B cell (primary cell): ENCODE measurements at regions of chr17 and their contacts with region 1.

Region 1: DNA sequence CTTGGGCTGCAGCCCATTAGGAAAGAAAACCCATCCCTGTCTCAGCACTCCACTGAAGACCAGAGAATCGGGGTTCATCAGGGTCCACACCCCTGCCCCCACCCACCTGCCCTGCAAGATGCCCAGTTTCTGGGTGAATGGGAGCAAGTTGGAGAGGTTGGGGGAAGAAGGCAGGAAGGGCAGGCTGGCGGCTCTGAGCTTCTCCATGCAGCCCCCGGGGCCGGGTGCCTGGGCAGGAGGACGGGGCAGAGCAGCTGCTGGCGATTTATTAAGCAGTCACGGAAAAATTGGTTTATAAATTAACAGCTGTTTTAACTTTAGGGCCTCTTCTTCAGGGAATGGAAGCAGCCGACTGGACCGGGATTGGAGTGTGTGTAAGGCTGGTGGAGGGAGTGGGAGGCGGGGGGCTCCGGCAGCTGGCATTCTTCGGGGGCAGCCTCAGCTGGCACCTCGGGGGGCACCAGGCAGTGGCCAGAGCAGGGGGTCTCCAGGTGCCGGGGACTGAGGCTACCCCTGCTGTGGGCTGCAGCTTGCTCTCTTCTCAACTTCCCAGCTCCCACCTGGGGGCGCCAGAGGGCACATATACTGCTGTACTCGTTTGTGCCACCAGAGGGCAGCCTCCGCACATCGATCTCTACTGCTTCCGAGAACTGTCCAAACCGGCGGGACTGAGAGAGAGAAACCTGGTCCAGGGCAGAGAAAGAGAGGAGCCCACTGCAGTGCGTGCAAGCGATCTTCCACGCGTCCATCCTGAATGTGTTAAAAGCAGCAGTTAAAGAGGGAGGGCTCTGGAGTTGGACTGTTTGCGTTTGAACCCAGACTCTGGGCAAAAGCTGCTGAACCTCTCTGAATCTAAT is 5.0 kb upstream of the PPP1R1B start:
- DNase-seq: peak; percentile 92
- ATAC-seq: peak; percentile 76
- H3K4me3 ChIP-seq: peak overlapping the region in 4 of 5 experiments; percentile 14 to 38 (median 29)
- H3K4me3 Mint-ChIP-seq: peak overlapping the region; percentile 84
- H3K27ac ChIP-seq: no peak overlapping the region
- H3K27ac Mint-ChIP-seq: peak overlapping the region; percentile 75
- H3K4me1 ChIP-seq: peaks cover 31 to 51% of the 10 kb centered on the region in 2 donors
- H3K4me1 Mint-ChIP-seq: peaks cover 32% of the 10 kb centered on the region
- H3K27me3 ChIP-seq: peaks cover 0 to 29% (median 9%) of the 10 kb centered on the region in 4 experiments
- H3K27me3 Mint-ChIP-seq: peaks cover 7% of the 10 kb centered on the region
- CTCF ChIP-seq: peak; percentile 100

Region 2: GRCh38 chr17:39527220-39527813 is 94.4 kb before region 1 on chr17:
- CTCF ChIA-PET with region 1: interaction called, 11 read pairs
- POLR2A ChIA-PET with region 1: no interaction called
- intact Hi-C with region 1: loop called (anchors 1 kb)
- DNase-seq: peak; percentile 43
- ATAC-seq: peak; percentile 31
- H3K4me3 ChIP-seq: no peak overlapping the region
- H3K4me3 Mint-ChIP-seq: no peak overlapping the region
- H3K27ac ChIP-seq: no peak overlapping the region
- H3K27ac Mint-ChIP-seq: no peak overlapping the region
- H3K4me1 ChIP-seq: no peaks in the 10 kb centered on the region
- H3K4me1 Mint-ChIP-seq: no peaks in the 10 kb centered on the region
- H3K27me3 ChIP-seq: no peaks in the 10 kb centered on the region
- H3K27me3 Mint-ChIP-seq: no peaks in the 10 kb centered on the region
- CTCF ChIP-seq: peak; percentile 52

Region 3: DNA sequence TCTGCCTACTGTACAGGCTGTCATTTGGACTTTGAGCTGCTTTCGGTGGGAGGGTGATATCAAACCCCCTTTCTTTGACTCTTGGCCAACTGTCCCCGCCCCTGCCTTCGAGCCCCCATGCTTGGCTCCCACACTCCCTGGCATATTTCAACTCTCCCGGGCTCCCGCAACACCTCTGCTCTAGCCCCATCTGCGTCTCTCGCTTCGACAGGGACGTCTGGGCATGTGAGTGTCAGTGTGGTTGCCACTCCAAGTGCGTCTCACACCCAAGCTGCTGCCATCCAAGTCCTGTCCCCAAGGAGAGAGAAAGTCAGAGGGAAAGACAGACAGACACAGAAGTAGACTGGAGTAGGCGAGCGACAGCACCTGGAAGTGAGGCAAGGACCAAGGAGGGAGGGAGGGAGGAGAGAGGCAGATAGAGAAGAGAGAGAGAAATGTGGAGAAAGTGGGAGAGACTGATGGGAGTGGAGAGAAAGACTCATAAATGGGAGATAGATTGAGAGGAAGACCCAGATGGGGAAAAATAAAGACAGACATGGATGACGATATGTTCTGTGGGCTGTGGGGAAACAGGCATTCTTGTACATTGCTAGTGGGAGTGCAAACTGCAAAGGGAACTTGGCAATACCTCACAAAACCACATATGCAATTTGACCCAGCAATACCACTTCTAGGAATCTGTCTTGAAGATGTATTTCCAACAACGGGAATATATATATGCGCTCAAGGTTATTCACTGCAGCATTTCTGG is 27.0 kb after region 1 on chr17:
- CTCF ChIA-PET with region 1: interaction called, 52 read pairs
- POLR2A ChIA-PET with region 1: no interaction called
- intact Hi-C with region 1: no loop called
- DNase-seq: no peak
- ATAC-seq: no peak
- H3K4me3 ChIP-seq: no peak overlapping the region
- H3K4me3 Mint-ChIP-seq: no peak overlapping the region
- H3K27ac ChIP-seq: no peak overlapping the region
- H3K27ac Mint-ChIP-seq: no peak overlapping the region
- H3K4me1 ChIP-seq: peaks cover 0 to 3% of the 10 kb centered on the region in 2 donors
- H3K4me1 Mint-ChIP-seq: peaks cover 33% of the 10 kb centered on the region
- H3K27me3 ChIP-seq: no peaks in the 10 kb centered on the region
- H3K27me3 Mint-ChIP-seq: no peaks in the 10 kb centered on the region
- CTCF ChIP-seq: no peak

Region 4: GRCh38 chr17:39687811-39688518 is 66.2 kb after region 1 on chr17 and contains the start of gene PGAP3:
- CTCF ChIA-PET with region 1: interaction called, 15 read pairs
- POLR2A ChIA-PET with region 1: no interaction called
- intact Hi-C with region 1: no loop called
- DNase-seq: peak; percentile 94
- ATAC-seq: peak; percentile 94
- H3K4me3 ChIP-seq: peak within 1 kb of the TSS; percentile 65 to 92 (median 75)
- H3K4me3 Mint-ChIP-seq: peak within 1 kb of the TSS; percentile 99
- H3K27ac ChIP-seq: peak within 1 kb of the TSS; percentile 70 to 87
- H3K27ac Mint-ChIP-seq: peak within 1 kb of the TSS; percentile 98
- H3K4me1 ChIP-seq: peaks cover 15 to 18% of the 10 kb centered on the region in 2 donors
- H3K4me1 Mint-ChIP-seq: peaks cover 21% of the 10 kb centered on the region
- H3K27me3 ChIP-seq: no peaks in the 10 kb centered on the region
- H3K27me3 Mint-ChIP-seq: no peaks in the 10 kb centered on the region
- CTCF ChIP-seq: no peak
- total RNA-seq, gene PGAP3: 34.3 and 36.9 TPM in 2 replicates

Region 5: GRCh38 chr17:39808409-39808997 is 186.8 kb after region 1 on chr17:
- CTCF ChIA-PET with region 1: interaction called, 10 read pairs
- POLR2A ChIA-PET with region 1: no interaction called
- intact Hi-C with region 1: no loop called
- DNase-seq: no peak
- ATAC-seq: no peak
- H3K4me3 ChIP-seq: no peak overlapping the region
- H3K4me3 Mint-ChIP-seq: no peak overlapping the region
- H3K27ac ChIP-seq: peak overlapping the region in 1 of 2 donors; percentile 79
- H3K27ac Mint-ChIP-seq: peak overlapping the region; percentile 81
- H3K4me1 ChIP-seq: peaks cover 26 to 32% of the 10 kb centered on the region in 2 donors
- H3K4me1 Mint-ChIP-seq: peaks cover 69% of the 10 kb centered on the region
- H3K27me3 ChIP-seq: no peaks in the 10 kb centered on the region
- H3K27me3 Mint-ChIP-seq: no peaks in the 10 kb centered on the region
- CTCF ChIP-seq: no peak

Region 6: DNA sequence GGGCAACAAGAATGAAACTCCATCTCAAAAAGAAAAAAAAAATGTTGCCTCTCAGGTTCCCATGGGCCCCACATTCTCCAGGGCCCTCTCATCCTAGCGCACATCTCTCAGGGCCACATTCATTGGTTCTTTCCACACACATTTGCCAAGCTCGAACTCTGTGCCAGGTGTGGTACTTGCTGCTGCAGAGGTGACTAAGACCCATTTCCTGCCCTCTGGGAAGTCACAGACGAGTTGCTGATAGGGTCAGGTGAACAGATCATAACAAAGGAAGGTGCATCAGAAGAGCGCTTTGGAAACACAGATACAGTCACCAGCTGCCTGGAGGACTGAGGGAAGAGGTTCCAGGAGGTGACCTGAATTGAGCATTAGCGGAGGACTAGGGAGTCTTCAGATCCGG is 342.1 kb after region 1 on chr17:
- CTCF ChIA-PET with region 1: interaction called, 5 read pairs
- POLR2A ChIA-PET with region 1: no interaction called
- intact Hi-C with region 1: loop called (anchors 1 kb)
- DNase-seq: no peak
- ATAC-seq: no peak
- H3K4me3 ChIP-seq: no peak overlapping the region
- H3K4me3 Mint-ChIP-seq: no peak overlapping the region
- H3K27ac ChIP-seq: no peak overlapping the region
- H3K27ac Mint-ChIP-seq: no peak overlapping the region
- H3K4me1 ChIP-seq: peaks cover 12 to 13% of the 10 kb centered on the region in 2 donors
- H3K4me1 Mint-ChIP-seq: peaks cover 9% of the 10 kb centered on the region
- H3K27me3 ChIP-seq: no peaks in the 10 kb centered on the region
- H3K27me3 Mint-ChIP-seq: peaks cover 15% of the 10 kb centered on the region
- CTCF ChIP-seq: no peak

Region 7: DNA sequence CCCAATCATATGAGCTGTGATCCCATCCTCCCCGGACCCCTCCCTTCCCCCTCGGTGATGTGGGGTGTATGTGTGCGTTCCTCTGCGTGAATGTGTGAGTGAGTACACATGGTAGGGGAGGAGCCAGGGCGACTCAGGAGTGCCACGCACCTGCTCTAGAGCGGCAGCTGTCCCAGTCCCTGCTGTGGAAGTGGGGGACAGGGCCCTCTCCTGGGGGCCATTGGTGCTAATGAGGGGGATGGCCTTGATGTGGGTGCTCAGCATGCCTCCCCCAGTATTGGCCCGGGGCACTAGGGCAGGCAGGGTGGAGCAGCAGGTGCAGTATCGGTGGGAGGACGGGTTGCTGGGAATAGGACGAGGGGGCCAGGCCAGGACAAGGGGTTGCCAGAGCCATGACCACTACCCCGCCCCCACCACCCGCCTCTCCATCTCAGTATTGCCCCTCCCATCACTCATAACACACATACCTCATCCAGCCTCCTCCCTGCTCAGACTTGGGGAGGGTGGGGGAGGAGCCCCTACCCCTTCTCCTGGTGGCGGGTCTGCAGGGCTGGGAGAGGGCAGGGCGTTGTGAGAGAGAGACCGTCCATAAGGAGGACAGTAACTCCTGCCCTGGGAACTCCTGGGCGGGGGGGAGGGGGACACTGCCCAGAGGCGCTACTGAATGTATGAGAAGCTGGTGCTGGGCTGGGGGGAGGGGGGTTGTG is 470.1 kb after region 1 on chr17:
- CTCF ChIA-PET with region 1: no interaction called
- POLR2A ChIA-PET with region 1: no interaction called
- intact Hi-C with region 1: no loop called
- DNase-seq: no peak
- ATAC-seq: no peak
- H3K4me3 ChIP-seq: no peak overlapping the region
- H3K4me3 Mint-ChIP-seq: no peak overlapping the region
- H3K27ac ChIP-seq: no peak overlapping the region
- H3K27ac Mint-ChIP-seq: no peak overlapping the region
- H3K4me1 ChIP-seq: peaks cover 18 to 27% of the 10 kb centered on the region in 2 donors
- H3K4me1 Mint-ChIP-seq: peaks cover 28% of the 10 kb centered on the region
- H3K27me3 ChIP-seq: no peaks in the 10 kb centered on the region
- H3K27me3 Mint-ChIP-seq: no peaks in the 10 kb centered on the region
- CTCF ChIP-seq: no peak